ENCODE measurements at regions of chr17 and their contacts with region 1.

Region 1: GRCh38 chr17:76523084-76524037 is 14.1 kb downstream of the CYGB start:
- DNase-seq: peak; percentile 54 to 65
- ATAC-seq: peak; percentile 48 to 65
- H3K4me3 ChIP-seq: no peak overlapping the region
- H3K27ac ChIP-seq: peak overlapping the region in 1 of 4 donors; percentile 1
- H3K4me1 ChIP-seq: peaks cover 13 to 19% of the 10 kb centered on the region in 2 donors
- H3K27me3 ChIP-seq: no peaks in the 10 kb centered on the region
- CTCF ChIP-seq: peak; percentile 99 to 100 (median 100)
- POLR2A ChIP-seq: no peak

Region 2: GRCh38 chr17:76492989-76493501 is 30.3 kb before region 1 on chr17:
- in situ Hi-C with region 1: no loop called
- intact Hi-C with region 1: no loop called
- DNase-seq: peak; percentile 43 to 63
- ATAC-seq: peak; percentile 33 to 53
- H3K4me3 ChIP-seq: peak overlapping the region in 1 of 4 donors; percentile 29
- H3K27ac ChIP-seq: peak overlapping the region; percentile 59 to 75 (median 72)
- H3K4me1 ChIP-seq: peaks cover 24 to 32% of the 10 kb centered on the region in 2 donors
- H3K27me3 ChIP-seq: no peaks in the 10 kb centered on the region
- CTCF ChIP-seq: no peak
- POLR2A ChIP-seq: peak; percentile 18 to 26

Region 3: DNA sequence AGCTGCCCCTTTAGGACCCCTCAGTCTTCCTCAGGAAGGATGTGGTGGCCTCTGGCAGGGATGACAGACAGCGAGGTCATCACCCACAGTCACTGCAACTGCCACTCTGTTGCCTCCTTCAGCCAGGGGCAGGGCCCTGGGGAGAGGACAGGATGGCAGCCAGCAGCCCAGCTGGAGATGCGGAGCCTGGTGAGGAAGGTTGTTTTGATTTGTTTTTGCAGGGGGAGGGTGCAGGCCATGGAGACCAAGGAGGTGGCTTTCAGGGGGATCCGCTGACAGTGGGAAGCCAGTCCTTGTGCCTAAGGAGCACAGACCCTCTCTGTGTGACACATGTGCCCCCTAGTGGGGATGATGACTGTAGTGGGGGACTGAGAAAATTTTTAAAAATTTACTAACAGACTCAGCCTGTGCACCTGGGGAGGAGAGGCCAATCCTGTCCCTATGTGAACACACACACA is 23.9 kb after region 1 on chr17:
- in situ Hi-C with region 1: no loop called
- intact Hi-C with region 1: loop called (anchors 1 kb)
- DNase-seq: peak in 1 of 2 donors; percentile 46
- ATAC-seq: peak; percentile 60 to 70
- H3K4me3 ChIP-seq: no peak overlapping the region
- H3K27ac ChIP-seq: peak overlapping the region; percentile 35 to 53 (median 44)
- H3K4me1 ChIP-seq: peaks cover 62 to 70% of the 10 kb centered on the region in 2 donors
- H3K27me3 ChIP-seq: no peaks in the 10 kb centered on the region
- CTCF ChIP-seq: peak; percentile 38 to 82 (median 81)
- POLR2A ChIP-seq: no peak

Region 4: DNA sequence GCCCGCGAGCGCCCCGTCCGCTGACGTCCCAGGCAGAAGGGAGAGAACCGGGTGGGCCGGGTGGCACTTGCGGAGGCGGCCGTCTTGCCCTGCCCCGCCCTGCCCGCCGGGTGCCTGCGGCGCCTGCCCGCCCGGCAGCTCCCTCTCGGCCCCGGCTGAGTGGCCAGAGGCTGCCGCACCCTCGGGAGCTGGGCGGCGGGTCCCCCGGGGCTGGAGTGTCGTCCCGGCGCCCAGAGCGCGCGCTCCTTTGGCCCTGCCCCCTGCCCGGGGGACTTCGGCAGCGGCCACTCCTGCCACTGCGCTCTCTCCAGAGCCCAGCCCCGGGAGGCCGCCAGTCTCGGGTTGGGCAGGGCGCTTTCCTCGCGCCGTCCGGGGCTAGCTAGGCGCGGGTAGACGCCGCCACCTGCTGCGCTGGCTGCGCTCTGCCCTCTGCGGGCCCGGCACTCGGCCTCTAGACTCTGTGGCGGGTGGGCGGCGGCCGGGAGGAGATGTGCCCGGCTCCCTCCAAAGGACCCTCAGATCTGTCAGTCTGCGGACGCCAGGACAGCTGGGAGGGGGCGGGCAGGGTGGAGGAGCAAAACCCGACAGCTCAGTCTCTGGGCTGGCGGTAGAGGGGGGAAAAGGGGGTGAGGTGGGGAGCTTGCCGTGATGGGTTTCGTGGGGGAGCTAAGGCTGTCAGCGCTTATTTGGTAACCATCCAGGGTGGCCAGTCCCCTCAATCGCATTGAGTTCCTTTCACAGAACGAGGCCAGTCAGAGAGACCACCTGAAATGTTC is 62.6 kb after region 1 on chr17 and contains the start of gene ST6GALNAC2:
- in situ Hi-C with region 1: loop called in 1 of 4 experiments (anchors 10 kb)
- intact Hi-C with region 1: loop called (anchors 1 kb)
- DNase-seq: peak; percentile 58 to 73
- ATAC-seq: peak; percentile 78 to 84
- H3K4me3 ChIP-seq: peak within 1 kb of the TSS; percentile 64 to 87 (median 78)
- H3K27ac ChIP-seq: peak within 1 kb of the TSS; percentile 61 to 84 (median 72)
- H3K4me1 ChIP-seq: peaks cover 6 to 14% of the 10 kb centered on the region in 2 donors
- H3K27me3 ChIP-seq: peaks cover 0 to 3% (median 0%) of the 10 kb centered on the region in 3 donors
- CTCF ChIP-seq: peak; percentile 67 to 79 (median 75)
- POLR2A ChIP-seq: peak; percentile 58 to 62
- total RNA-seq, gene ST6GALNAC2: 13.6 to 31.1 (median 27.4) TPM

Region 5: GRCh38 chr17:76623271-76624146 is 100.1 kb after region 1 on chr17:
- in situ Hi-C with region 1: loop called in 2 of 4 experiments (anchors 5 to 10 kb)
- intact Hi-C with region 1: loop called (anchors 1 kb)
- DNase-seq: peak; percentile 37 to 56
- ATAC-seq: peak; percentile 85 to 94
- H3K4me3 ChIP-seq: no peak overlapping the region
- H3K27ac ChIP-seq: no peak overlapping the region
- H3K4me1 ChIP-seq: no peaks in the 10 kb centered on the region
- H3K27me3 ChIP-seq: no peaks in the 10 kb centered on the region
- CTCF ChIP-seq: peak; percentile 78 to 97 (median 86)
- POLR2A ChIP-seq: no peak

Region 6: DNA sequence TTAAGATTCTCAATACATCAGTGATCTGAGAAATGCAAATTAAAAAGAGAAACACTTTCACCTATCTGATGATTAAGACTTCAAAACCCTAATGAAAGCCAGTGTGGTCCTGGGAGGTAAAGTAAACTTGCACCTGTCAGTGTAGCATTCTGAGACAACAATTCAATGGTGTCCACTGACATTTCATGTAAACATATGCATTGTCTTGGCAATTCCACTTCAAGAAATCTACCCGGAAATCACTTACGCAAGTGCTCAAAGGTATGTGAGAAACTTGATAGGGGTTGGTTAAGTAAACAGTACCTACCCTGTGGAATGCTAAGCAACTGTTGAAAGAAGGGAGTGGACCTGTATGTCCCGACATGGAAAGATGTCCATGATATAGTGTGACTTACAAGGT is 118.1 kb after region 1 on chr17:
- in situ Hi-C with region 1: no loop called
- intact Hi-C with region 1: no loop called
- DNase-seq: no peak
- ATAC-seq: no peak
- H3K4me3 ChIP-seq: no peak overlapping the region
- H3K27ac ChIP-seq: no peak overlapping the region
- H3K4me1 ChIP-seq: peaks cover 0 to 3% of the 10 kb centered on the region in 2 donors
- H3K27me3 ChIP-seq: no peaks in the 10 kb centered on the region
- CTCF ChIP-seq: no peak
- POLR2A ChIP-seq: no peak

Region 7: DNA sequence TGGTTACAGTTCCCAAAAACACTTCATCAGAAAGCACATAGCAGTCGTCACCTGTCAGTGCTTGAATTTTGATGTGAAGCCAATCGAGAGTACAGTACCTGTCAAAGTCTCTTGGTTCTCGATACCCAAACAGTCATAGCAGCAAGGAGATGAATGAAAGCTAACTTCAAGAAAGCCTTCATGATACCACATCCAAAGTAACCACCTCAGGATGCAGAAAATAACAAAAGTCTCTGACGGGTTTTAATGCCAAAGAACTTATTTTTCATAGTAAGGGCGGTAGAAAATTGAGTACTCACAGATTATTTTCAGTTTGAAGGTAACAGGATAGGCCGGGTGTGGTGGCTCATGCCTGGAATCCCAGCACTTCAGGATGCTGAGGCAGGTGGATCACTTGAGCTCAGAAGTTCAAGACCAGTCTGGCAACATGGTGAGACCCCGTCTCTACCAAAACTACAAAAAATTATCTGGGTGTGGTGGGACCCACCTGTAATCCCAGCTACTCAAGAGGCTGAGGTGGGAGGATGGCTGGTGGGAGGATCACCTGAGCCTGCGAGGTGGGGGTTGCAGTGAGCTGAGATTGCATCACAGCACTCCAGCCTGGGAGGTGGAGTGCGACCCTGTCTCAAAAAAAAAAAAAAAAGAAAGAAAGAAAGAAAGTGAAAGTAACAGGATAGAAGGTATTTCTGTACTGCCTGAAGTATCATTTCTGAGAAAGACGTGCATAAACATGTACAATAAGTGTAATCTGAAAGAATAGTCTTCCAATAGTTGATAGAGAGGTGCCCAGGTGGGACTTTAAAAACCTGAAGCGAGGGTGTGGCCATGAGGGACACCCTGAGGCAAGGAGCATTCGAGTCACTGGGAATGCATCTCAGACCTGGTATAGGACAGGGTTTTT is 229.9 kb after region 1 on chr17:
- in situ Hi-C with region 1: no loop called
- intact Hi-C with region 1: no loop called
- DNase-seq: no peak
- ATAC-seq: no peak
- H3K4me3 ChIP-seq: no peak overlapping the region
- H3K27ac ChIP-seq: no peak overlapping the region
- H3K4me1 ChIP-seq: peaks cover 0 to 1% of the 10 kb centered on the region in 2 donors
- H3K27me3 ChIP-seq: no peaks in the 10 kb centered on the region
- CTCF ChIP-seq: no peak
- POLR2A ChIP-seq: no peak